CD8-positive, alpha-beta T cell (primary cell): ENCODE measurements at regions of chr3 and their contacts with region 1.

Region 1: DNA sequence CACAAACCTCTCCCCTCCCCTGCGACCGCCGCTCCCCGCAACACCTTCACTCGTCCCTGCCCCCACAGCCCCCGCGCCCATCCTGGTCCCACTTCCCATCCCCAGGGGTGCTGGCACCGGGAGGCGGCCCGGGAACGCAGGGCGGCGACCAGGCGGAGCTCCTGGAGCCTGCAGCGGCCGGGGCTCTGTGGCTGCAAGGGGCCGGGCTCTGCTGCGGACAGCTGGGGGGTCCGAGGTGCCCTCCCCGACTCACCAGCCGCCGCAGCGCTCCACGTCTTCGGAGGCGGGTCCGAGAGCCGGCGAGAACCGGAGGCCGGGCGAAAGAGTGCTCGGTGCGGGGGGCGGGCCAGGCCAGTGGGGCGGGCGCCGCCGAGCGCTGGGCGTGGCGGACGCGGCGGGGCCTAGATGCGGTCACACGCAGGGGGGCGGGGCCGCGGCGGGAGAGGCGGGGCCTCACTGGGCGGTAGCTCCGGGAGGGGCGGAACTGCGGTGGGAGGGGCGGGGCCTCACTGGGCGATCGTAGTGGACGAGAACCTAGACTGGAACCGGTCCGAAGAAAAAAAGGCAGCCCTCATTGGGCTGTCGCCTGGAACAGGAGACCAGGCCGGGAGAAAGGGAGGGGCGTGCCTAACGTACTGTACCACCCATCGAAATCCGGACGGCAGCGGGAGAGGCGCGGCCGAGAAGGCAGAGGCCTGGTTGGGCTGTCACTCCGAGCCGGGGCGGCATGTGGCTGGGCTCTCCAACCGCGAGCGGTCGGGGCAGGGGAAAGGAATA is at the start of gene ANO10:
- DNase-seq: peak; percentile 85 to 97 (median 95)
- ATAC-seq: peak; percentile 94
- H3K4me3 ChIP-seq: peak within 1 kb of the TSS; percentile 69 to 83
- H3K4me3 Mint-ChIP-seq: peak within 1 kb of the TSS; percentile 87
- H3K27ac ChIP-seq: peak within 1 kb of the TSS; percentile 46
- H3K27ac Mint-ChIP-seq: peak within 1 kb of the TSS; percentile 76
- H3K4me1 ChIP-seq: peaks cover 13% of the 10 kb centered on the region
- H3K4me1 Mint-ChIP-seq: peaks cover 17% of the 10 kb centered on the region
- H3K27me3 ChIP-seq: no peaks in the 10 kb centered on the region
- H3K27me3 Mint-ChIP-seq: no peaks in the 10 kb centered on the region
- CTCF ChIP-seq: no peak
- total RNA-seq, gene ANO10: 6.1 to 7.0 TPM

Region 2: GRCh38 chr3:42581709-42582473 is 1040.0 kb before region 1 on chr3 and contains the start of gene SEC22C:
- CTCF ChIA-PET with region 1: no interaction called
- POLR2A ChIA-PET with region 1: no interaction called
- intact Hi-C with region 1: loop called in 1 of 2 experiments (anchors 5 kb)
- DNase-seq: peak; percentile 88 to 97 (median 96)
- ATAC-seq: peak; percentile 88
- H3K4me3 ChIP-seq: peak within 1 kb of the TSS; percentile 70 to 88
- H3K4me3 Mint-ChIP-seq: peak within 1 kb of the TSS; percentile 92
- H3K27ac ChIP-seq: peak within 1 kb of the TSS; percentile 93 to 94
- H3K27ac Mint-ChIP-seq: peak within 1 kb of the TSS; percentile 98
- H3K4me1 ChIP-seq: peaks cover 22% of the 10 kb centered on the region
- H3K4me1 Mint-ChIP-seq: peaks cover 48% of the 10 kb centered on the region
- H3K27me3 ChIP-seq: no peaks in the 10 kb centered on the region
- H3K27me3 Mint-ChIP-seq: no peaks in the 10 kb centered on the region
- CTCF ChIP-seq: peak; percentile 32
- total RNA-seq, gene SEC22C: 71.3 to 75.2 TPM

Region 3: GRCh38 chr3:43024181-43024885 is 597.5 kb before region 1 on chr3:
- CTCF ChIA-PET with region 1: no interaction called
- POLR2A ChIA-PET with region 1: no interaction called
- intact Hi-C with region 1: loop called in 1 of 2 experiments (anchors 5 kb)
- DNase-seq: peak in 7 of 9 experiments; percentile 39 to 82 (median 72)
- ATAC-seq: peak; percentile 91
- H3K4me3 ChIP-seq: peak overlapping the region; percentile 0 to 20
- H3K4me3 Mint-ChIP-seq: peak overlapping the region; percentile 74
- H3K27ac ChIP-seq: peak overlapping the region; percentile 25 to 56
- H3K27ac Mint-ChIP-seq: peak overlapping the region; percentile 95
- H3K4me1 ChIP-seq: peaks cover 69% of the 10 kb centered on the region
- H3K4me1 Mint-ChIP-seq: peaks cover 79% of the 10 kb centered on the region
- H3K27me3 ChIP-seq: no peaks in the 10 kb centered on the region
- H3K27me3 Mint-ChIP-seq: no peaks in the 10 kb centered on the region
- CTCF ChIP-seq: no peak

Region 4: GRCh38 chr3:43378066-43378935 is 243.5 kb before region 1 on chr3:
- CTCF ChIA-PET with region 1: interaction called, 3 read pairs
- POLR2A ChIA-PET with region 1: no interaction called
- intact Hi-C with region 1: loop called in 1 of 2 experiments (anchors 10 kb)
- DNase-seq: peak; percentile 54 to 87 (median 78)
- ATAC-seq: peak; percentile 99
- H3K4me3 ChIP-seq: no peak overlapping the region
- H3K4me3 Mint-ChIP-seq: no peak overlapping the region
- H3K27ac ChIP-seq: no peak overlapping the region
- H3K27ac Mint-ChIP-seq: peak overlapping the region; percentile 72
- H3K4me1 ChIP-seq: peaks cover 16% of the 10 kb centered on the region
- H3K4me1 Mint-ChIP-seq: peaks cover 31% of the 10 kb centered on the region
- H3K27me3 ChIP-seq: no peaks in the 10 kb centered on the region
- H3K27me3 Mint-ChIP-seq: no peaks in the 10 kb centered on the region
- CTCF ChIP-seq: peak; percentile 79

Region 5: DNA sequence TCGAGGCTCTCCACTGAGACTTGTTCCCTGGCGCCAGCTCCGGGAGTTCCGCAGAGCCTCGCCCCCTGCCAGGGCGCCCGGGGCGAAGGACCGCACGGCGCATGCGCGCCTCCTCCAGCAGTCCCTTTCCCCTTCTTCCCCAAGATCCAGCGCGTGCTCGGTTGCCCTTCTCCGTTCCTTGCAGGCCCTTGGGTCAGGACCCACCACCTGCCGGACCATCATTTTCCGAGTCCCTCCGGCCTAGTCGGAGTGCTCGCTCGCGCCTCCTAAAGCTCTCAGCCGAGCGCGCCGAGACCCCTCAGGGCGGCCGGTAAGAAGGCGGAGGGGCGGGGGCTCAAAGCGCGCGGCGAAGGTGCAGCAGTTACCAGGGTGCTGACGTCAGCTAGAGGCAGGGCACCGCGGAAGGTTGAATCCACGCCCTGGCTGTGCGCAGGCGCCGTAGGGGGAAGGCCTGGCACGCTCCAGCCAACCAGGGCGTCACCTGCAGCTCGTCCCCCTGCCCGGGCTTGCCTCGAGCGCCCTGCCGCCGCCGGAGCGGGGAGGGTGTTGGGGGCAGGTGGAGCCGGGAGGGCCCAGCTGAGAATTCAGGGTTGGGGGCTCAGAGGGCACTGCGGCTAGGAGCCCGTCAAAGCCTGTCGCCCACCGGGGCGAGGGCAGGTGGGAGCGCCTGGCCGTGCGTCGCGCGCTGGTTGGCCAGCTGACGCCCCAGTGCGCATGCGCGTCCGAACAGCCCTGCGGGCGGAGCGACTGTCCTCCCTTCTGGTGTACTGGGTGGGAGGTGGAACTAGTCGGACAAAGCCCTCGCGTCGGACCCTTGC is 716.4 kb after region 1 on chr3 and contains the start of gene TCAIM:
- CTCF ChIA-PET with region 1: no interaction called
- POLR2A ChIA-PET with region 1: no interaction called
- intact Hi-C with region 1: loop called (anchors 5 kb)
- DNase-seq: peak; percentile 97 to 100 (median 99)
- ATAC-seq: peak; percentile 92
- H3K4me3 ChIP-seq: peak within 1 kb of the TSS; percentile 76 to 91
- H3K4me3 Mint-ChIP-seq: peak within 1 kb of the TSS; percentile 93
- H3K27ac ChIP-seq: peak within 1 kb of the TSS; percentile 88 to 93
- H3K27ac Mint-ChIP-seq: peak within 1 kb of the TSS; percentile 97
- H3K4me1 ChIP-seq: peaks cover 15% of the 10 kb centered on the region
- H3K4me1 Mint-ChIP-seq: peaks cover 32% of the 10 kb centered on the region
- H3K27me3 ChIP-seq: no peaks in the 10 kb centered on the region
- H3K27me3 Mint-ChIP-seq: peaks cover 6% of the 10 kb centered on the region
- CTCF ChIP-seq: no peak
- total RNA-seq, gene TCAIM: 3.1 to 3.7 TPM

Region 6: DNA sequence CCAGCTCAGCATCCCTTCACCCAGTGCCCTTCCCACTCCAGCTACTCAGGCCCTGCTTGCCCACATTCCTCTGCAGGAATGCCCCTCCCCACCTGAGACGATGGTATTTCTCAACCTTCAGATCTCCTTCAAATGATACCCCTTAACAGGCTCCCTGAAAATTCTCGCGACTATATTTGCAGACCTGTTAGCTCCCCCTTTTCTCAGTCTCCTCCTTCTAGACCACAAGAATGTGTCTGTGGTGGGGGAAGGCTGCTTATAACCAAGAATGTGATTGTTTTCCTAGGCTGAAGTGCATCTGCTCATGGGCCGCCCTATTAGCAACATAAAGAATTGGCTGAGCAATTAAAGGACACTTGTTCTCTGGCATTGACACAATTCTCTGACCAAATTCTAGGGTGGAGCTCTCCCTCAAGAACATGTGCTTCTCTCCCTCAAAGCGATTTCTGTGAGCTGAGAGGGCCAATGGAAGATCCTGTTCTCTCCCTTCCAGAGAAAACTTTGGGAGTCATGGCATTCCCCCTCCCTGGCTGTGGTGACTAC is 1953.6 kb after region 1 on chr3:
- CTCF ChIA-PET with region 1: no interaction called
- POLR2A ChIA-PET with region 1: no interaction called
- intact Hi-C with region 1: no loop called
- DNase-seq: no peak
- ATAC-seq: no peak
- H3K4me3 ChIP-seq: no peak overlapping the region
- H3K4me3 Mint-ChIP-seq: no peak overlapping the region
- H3K27ac ChIP-seq: no peak overlapping the region
- H3K27ac Mint-ChIP-seq: no peak overlapping the region
- H3K4me1 ChIP-seq: no peaks in the 10 kb centered on the region
- H3K4me1 Mint-ChIP-seq: no peaks in the 10 kb centered on the region
- H3K27me3 ChIP-seq: no peaks in the 10 kb centered on the region
- H3K27me3 Mint-ChIP-seq: no peaks in the 10 kb centered on the region
- CTCF ChIP-seq: no peak